ENCODE measurements at regions of chr16 and their contacts with region 1.

Region 1: DNA sequence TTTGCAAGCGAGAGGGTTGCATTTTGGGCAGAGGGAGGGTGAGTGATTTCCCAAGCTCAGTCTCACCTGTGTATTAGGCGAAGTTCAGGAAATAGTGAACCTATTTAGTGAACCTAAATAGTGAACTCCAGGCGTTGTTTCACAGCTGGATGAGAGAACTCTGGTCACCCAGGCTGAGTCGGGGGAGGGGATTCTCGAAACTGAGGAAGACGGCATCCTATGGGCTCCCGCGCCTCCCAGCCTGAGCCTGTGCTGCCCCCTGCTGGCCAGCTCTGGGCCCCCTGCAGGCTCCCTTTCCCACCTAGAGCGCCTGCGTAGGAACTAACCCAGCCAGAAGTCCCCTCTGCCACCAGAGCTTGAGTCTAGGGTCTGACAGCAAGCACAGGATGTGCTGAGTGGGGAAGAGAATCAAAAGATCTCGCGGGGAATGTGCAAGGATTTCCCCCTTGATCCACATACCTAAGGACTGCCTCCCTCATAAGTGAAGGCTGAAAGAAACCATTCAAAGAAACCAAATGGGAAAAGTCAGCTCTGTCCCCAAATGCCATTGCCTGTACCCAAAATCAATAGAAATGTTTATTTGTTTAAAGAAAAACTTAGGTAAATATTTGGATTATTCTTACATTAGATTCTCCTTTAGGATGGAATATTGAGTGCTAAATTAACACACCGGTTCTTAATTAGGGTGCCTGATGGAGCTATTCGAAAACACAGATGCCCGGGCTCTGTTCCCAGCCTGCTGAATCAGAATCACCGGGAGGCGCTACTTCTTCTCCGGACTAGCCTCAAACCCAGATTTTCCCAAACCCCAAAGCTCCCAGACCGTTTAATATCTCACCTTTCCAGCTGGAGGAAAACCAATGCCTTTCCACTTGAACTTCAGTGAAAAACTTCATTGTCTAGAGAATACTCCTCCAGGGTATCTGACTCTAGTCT is 14.8 kb upstream of the MARVELD3 start:
- DNase-seq: peak; percentile 72
- ATAC-seq: peak; percentile 96
- H3K4me3 ChIP-seq: peak overlapping the region in 1 of 3 experiments; percentile 23; a peak in 2 of 6 replicates
- H3K27ac ChIP-seq: no peak overlapping the region
- H3K4me1 ChIP-seq: peaks cover 70% of the 10 kb centered on the region
- H3K27me3 ChIP-seq: no peaks in the 10 kb centered on the region
- CTCF ChIP-seq: peak; percentile 100
- EP300 ChIP-seq: no peak
- POLR2A ChIP-seq: no peak
- RAD21 ChIP-seq: peak; percentile 100

Region 2: GRCh38 chr16:71426072-71426879 is 184.9 kb before region 1 on chr16:
- CTCF ChIA-PET with region 1: no interaction called
- POLR2A ChIA-PET with region 1: no interaction called
- in situ Hi-C with region 1: no loop called
- intact Hi-C with region 1: loop called (anchors 10 kb)
- DNase-seq: peak; percentile 99
- ATAC-seq: peak; percentile 93
- H3K4me3 ChIP-seq: peak overlapping the region; percentile 57 to 80 (median 59)
- H3K27ac ChIP-seq: peak overlapping the region; percentile 41
- H3K4me1 ChIP-seq: peaks cover 30% of the 10 kb centered on the region
- H3K27me3 ChIP-seq: peaks cover 4 to 32% of the 10 kb centered on the region in 2 experiments
- CTCF ChIP-seq: peak; percentile 44
- EP300 ChIP-seq: peak; percentile 9 to 43; a peak in 1 of 4 replicates
- POLR2A ChIP-seq: no peak
- RAD21 ChIP-seq: no peak; the same call in 1 of the 2 replicates

Region 3: GRCh38 chr16:71484006-71484893 is 127.0 kb before region 1 on chr16:
- CTCF ChIA-PET with region 1: interaction called, 10 read pairs
- POLR2A ChIA-PET with region 1: interaction called, 5 read pairs
- in situ Hi-C with region 1: loop called (anchors 10 kb)
- intact Hi-C with region 1: loop called (anchors 1 kb)
- DNase-seq: peak; percentile 91
- ATAC-seq: peak; percentile 93
- H3K4me3 ChIP-seq: peak overlapping the region; percentile 81 to 95 (median 88)
- H3K27ac ChIP-seq: peak overlapping the region; percentile 83
- H3K4me1 ChIP-seq: peaks cover 24% of the 10 kb centered on the region
- H3K27me3 ChIP-seq: peaks cover 0 to 4% of the 10 kb centered on the region in 2 experiments; a peak in 2 of 5 replicates
- CTCF ChIP-seq: no peak; the same call in 1 of the 2 replicates
- EP300 ChIP-seq: no peak
- POLR2A ChIP-seq: peak; percentile 85 to 86
- RAD21 ChIP-seq: peak; percentile 46; the same call in 1 of the 2 replicates

Region 4: DNA sequence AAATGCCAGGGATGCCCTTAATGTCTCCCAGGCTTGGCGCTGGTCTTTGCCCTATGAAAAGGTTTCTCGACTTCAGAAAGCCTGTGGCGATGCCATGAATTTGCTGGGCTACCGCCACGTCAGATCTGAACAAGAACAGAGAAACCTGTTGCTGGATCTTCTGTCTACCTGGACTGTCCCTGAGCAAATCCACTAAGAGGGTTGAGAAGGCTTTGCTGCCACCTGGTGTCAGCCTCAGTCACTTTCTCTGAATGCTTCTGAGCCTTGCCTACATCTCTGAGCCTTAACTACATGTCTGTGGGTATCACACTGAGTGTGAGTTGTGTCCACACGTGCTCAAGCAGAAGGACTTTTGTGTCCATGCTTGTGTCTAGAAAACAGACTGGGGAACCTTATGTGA is 73.6 kb before region 1 on chr16:
- CTCF ChIA-PET with region 1: interaction called, 20 read pairs
- POLR2A ChIA-PET with region 1: no interaction called
- in situ Hi-C with region 1: no loop called
- intact Hi-C with region 1: loop called (anchors 1 kb)
- DNase-seq: peak; percentile 66
- ATAC-seq: peak; percentile 93
- H3K4me3 ChIP-seq: no peak overlapping the region
- H3K27ac ChIP-seq: no peak overlapping the region
- H3K4me1 ChIP-seq: no peaks in the 10 kb centered on the region
- H3K27me3 ChIP-seq: peaks cover 0 to 19% of the 10 kb centered on the region in 2 experiments; a peak in 3 of 5 replicates
- CTCF ChIP-seq: peak; percentile 92
- EP300 ChIP-seq: no peak
- POLR2A ChIP-seq: no peak
- RAD21 ChIP-seq: peak; percentile 77

Region 5: GRCh38 chr16:71572497-71573116 is 38.6 kb before region 1 on chr16:
- CTCF ChIA-PET with region 1: no interaction called
- POLR2A ChIA-PET with region 1: interaction called, 15 read pairs
- in situ Hi-C with region 1: loop called (anchors 5 kb)
- intact Hi-C with region 1: no loop called
- DNase-seq: peak; percentile 97
- ATAC-seq: peak; percentile 99
- H3K4me3 ChIP-seq: peak overlapping the region in 2 of 3 experiments; percentile 19 to 20; a peak in 2 of 6 replicates
- H3K27ac ChIP-seq: peak overlapping the region; percentile 91
- H3K4me1 ChIP-seq: peaks cover 83% of the 10 kb centered on the region
- H3K27me3 ChIP-seq: no peaks in the 10 kb centered on the region
- CTCF ChIP-seq: no peak
- EP300 ChIP-seq: peak; percentile 15 to 82; a peak in 3 of 4 replicates
- POLR2A ChIP-seq: peak; percentile 44 to 51; a peak in 2 of 4 replicates
- RAD21 ChIP-seq: peak; percentile 13; the same call in 1 of the 2 replicates

Region 6: GRCh38 chr16:71594000-71594646 is 17.1 kb before region 1 on chr16:
- CTCF ChIA-PET with region 1: interaction called, 5 read pairs
- POLR2A ChIA-PET with region 1: interaction called, 13 read pairs
- in situ Hi-C with region 1: no loop called
- intact Hi-C with region 1: no loop called
- DNase-seq: peak; percentile 93
- ATAC-seq: peak; percentile 87
- H3K4me3 ChIP-seq: peak overlapping the region in 2 of 3 experiments; percentile 9 to 23; a peak in 2 of 6 replicates
- H3K27ac ChIP-seq: peak overlapping the region; percentile 92
- H3K4me1 ChIP-seq: peaks cover 90% of the 10 kb centered on the region
- H3K27me3 ChIP-seq: no peaks in the 10 kb centered on the region
- CTCF ChIP-seq: peak; percentile 25; the same call in 1 of the 2 replicates
- EP300 ChIP-seq: peak in 1 of 2 experiments; percentile 92; a peak in 2 of 4 replicates
- POLR2A ChIP-seq: peak in 1 of 2 experiments; percentile 58; a peak in 1 of 4 replicates
- RAD21 ChIP-seq: 0 out of 2 replicates have a peak, but pooled peaks have one; percentile 18

Region 7: DNA sequence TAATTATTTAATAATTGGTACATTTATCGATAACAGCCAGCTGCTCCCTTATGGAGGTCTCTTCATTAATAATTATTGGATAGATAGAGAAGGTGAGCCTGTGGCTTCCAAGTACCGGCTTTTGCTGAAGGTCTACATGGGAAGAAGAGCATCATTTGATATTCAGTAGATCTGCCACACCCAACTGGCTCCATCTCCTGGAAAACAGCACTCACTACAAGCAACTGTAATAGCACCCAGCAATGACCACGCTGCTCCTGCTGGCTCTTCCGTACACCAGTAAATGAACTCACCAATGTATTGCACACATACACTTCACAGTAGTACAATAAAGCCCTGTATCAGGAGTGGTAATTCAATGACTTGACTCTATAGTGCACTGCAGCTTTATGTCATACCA is 34.2 kb after region 1 on chr16:
- CTCF ChIA-PET with region 1: interaction called, 6 read pairs
- POLR2A ChIA-PET with region 1: no interaction called
- in situ Hi-C with region 1: no loop called
- intact Hi-C with region 1: loop called (anchors 1 kb)
- DNase-seq: peak; percentile 67
- ATAC-seq: peak; percentile 90
- H3K4me3 ChIP-seq: no peak overlapping the region
- H3K27ac ChIP-seq: no peak overlapping the region
- H3K4me1 ChIP-seq: no peaks in the 10 kb centered on the region
- H3K27me3 ChIP-seq: no peaks in the 10 kb centered on the region
- CTCF ChIP-seq: peak; percentile 83
- EP300 ChIP-seq: no peak
- POLR2A ChIP-seq: no peak
- RAD21 ChIP-seq: peak; percentile 78